Posterior cingulate gyrus (tissue), 11 donors: ENCODE measurements at regions of chr11 and their contacts with region 1.

Region 1: DNA sequence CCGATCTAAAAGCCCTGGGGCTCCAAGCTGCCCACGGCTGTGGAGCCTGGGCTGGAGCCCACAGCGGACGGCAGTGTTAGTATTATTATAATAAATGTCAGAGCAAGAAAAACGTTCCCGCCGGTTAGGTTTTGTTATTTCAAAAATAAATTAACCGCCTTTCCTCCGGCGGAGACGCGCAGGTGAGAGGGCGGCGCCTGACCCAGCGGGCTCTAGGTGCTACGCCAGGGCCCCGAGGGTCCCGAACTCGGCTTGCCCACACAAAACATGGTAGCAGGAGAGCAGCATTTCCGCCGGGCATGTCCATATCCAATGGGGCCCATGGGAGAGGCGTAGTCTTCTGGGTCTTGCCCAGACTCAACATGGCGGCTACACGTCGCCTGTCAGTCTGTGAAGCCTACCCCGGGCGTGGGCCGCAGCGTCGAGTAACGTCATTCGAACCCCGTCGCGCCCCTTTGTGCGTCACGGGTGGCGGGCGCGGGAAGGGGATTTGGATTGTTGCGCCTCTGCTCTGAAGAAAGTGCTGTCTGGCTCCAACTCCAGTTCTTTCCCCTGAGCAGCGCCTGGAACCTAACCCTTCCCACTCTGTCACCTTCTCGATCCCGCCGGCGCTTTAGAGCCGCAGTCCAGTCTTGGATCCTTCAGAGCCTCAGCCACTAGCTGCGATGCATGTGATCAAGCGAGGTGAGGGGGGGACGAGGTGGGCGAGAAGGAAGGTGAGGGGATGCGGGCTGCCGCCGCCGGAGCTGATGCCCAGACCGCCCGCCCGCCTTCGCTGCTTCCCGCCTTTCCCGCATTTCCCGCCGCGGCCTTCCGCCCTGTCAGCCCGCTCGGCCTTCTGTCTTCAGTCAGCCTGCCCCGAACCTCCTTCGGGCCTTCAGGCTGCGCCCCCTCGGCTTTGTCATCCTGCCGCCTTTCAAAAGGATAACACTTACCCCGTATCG is at the start of gene RRM1:
- DNase-seq: peak; percentile 91 to 99 (median 97)

Region 2: DNA sequence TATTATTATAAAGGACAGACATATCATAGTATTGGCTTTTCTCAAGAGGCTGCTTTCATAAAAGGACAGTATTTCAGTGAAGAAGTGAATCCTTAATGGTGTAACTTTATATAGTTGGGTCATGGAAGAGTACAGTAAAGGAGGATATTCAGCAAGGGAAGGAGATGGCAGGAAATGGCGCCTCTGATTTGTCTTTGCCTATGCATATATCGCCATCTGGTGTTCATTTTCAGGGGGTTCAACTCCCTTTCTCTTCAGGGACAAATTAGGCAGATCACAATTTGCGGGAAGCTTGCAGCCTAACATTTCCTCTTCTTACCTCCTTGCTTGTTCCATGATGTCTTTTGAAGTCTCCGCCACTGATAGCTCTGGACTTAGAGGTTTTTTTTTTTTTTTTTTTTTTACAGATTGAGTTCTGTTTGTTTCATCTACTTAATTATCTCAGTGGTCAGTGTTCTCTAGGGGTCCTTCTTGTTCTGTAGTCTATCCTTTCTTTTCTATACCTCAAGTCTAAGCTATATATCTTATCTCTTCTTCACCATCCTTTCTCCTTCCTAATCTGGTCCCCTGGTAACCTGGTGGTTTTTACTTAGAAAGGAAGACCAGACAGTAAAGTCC is 21.8 kb before region 1 on chr11:
- intact Hi-C with region 1: loop called (anchors 1 kb)
- DNase-seq: peak in 5 of 10 donors; percentile 34 to 87 (median 40)